Heart left ventricle (tissue), 16 donors: ENCODE measurements at regions of chr9 and their contacts with region 1.

Region 1: DNA sequence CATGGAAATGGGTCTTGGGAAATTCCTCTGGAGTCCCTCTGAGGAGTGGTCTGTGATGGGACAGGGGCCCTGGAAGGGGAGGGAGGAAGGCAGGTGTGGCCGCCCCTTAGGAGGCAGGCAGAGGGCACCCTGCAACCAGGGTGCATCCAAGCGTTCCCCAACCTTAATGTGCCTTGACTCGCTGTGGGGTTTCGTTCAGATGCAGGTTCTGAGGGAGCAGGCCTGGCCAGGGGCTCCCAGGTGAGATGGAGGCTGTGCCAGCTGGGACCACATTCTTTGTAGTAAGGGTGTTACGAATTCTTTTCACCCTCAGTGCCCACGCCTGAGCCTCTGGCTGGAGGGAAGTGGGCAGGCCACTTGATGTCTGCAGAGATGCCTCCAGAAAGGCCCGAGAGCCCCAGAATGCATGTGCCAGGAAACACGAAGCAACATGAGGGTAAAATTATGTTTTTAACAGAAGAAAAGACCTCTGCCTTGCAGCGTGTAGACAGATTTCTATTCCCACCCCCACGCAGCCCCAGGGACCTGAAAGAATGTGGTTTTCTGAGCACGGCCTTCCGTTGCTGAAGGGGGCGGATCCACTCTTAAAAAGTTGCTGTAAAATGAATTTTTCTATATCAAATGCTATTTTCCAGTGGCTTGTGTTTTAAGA is 150.4 kb upstream of the IER5L start:
- DNase-seq: peak in 2 of 5 donors; percentile 52 to 68
- ATAC-seq: peak in 1 of 4 donors; percentile 42
- H3K4me3 ChIP-seq: no peak overlapping the region
- H3K27ac ChIP-seq: peak overlapping the region in 8 of 12 donors; percentile 21 to 85 (median 39)
- H3K4me1 ChIP-seq: peaks cover 0 to 40% (median 15%) of the 10 kb centered on the region in 12 donors
- H3K27me3 ChIP-seq: no peaks in the 10 kb centered on the region
- CTCF ChIP-seq: no peak
- POLR2A ChIP-seq: no peak

Region 2: DNA sequence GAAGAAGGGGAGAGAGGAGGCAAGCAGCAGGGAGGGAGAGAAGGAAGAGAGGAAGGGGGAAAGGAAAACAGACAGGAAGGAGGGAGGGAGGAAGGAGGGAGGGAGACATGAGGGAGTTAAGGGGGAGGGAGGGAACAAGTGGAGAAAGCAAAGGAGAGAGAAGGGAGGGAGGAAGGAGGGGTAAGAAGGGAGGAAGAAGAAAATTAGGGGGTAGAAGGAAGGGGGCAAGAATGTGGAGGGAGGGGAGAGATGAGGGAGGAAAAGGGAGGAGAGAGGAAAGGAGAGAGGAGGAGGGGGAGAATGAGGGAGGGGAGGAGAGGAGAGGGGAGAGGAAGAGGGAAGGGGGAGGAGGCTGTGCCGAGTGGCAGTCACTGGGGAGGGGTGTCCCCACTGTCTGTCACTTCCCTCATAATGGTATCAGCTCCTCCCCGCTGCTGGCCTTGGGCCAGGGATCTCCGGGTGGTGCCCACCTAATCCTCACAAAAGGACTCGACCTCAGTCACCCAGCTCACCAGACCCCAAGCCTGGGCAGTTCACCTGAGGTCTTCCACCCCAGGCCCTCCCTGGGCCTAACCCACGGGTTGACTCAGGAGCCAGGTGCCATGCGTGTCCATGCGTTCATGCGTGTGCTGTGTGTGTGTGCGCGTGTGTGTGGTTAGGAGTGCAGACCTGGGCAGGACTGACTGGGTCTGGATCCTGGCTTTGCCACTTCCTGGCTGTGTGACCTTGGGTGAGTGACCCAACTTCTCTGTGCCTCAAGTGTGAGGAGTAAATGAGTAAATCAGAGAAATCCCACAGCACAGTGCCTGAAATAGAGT is 274.3 kb after region 1 on chr9:
- intact Hi-C with region 1: loop called in 2 of 10 experiments (anchors 5 to 10 kb)
- DNase-seq: no peak
- ATAC-seq: no peak
- H3K4me3 ChIP-seq: no peak overlapping the region
- H3K27ac ChIP-seq: peak overlapping the region in 1 of 12 donors; percentile 17
- H3K4me1 ChIP-seq: peaks cover 0 to 27% (median 16%) of the 10 kb centered on the region in 12 donors
- H3K27me3 ChIP-seq: peaks cover 0 to 14% (median 0%) of the 10 kb centered on the region in 9 donors
- CTCF ChIP-seq: no peak
- POLR2A ChIP-seq: no peak

Region 3: DNA sequence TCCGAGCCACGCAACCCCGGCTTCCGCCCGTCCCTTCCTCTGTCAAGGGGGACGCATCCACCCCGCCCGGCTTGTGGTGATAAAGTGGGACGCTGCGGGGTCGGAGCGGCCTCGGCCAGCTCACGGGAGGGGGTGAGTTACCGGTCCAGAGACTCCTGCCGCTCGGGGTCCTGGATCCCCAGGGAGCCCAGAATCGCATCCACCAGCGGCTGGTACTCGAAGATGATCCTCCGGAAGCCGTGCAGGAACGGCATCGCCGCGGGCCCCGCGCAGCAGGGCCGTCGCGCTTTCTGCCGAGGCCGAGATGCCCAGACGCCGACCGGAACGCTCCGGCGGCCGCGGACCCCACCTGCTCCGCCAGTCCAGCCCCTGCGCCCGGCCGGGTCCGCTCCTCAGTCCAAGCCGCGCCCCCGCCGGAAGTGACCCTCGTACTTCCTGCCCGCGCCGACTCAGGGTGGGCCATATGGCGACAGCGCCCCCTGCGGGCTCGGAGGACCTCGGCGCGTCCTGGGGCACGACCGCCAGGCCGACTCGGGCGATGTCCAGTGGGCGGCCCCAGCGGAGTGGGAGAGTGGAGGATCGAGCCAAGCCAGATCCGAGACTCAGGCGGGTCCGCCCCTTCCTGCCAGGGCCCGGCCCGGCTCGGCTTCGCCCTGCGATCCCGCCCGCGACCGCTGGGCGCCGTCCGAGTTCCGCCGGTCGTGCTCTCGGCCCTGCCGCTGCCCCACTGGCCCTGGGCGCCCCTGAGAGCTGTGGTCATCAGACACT is 313.4 kb after region 1 on chr9 and contains the start of gene ASB6:
- intact Hi-C with region 1: no loop called
- DNase-seq: peak; percentile 98 to 99 (median 98)
- ATAC-seq: peak; percentile 93 to 97 (median 95)
- H3K4me3 ChIP-seq: peak within 1 kb of the TSS; percentile 69 to 100 (median 95)
- H3K27ac ChIP-seq: peak within 1 kb of the TSS; percentile 55 to 85 (median 82)
- H3K4me1 ChIP-seq: peaks cover 0 to 26% (median 21%) of the 10 kb centered on the region in 12 donors
- H3K27me3 ChIP-seq: no peaks in the 10 kb centered on the region
- CTCF ChIP-seq: peak; percentile 97 to 100 (median 100)
- POLR2A ChIP-seq: peak in 1 of 2 donors; percentile 77
- total RNA-seq, gene ASB6: 7.5 to 22.5 (median 10.3) TPM